Astrocyte of the cerebellum (primary cell): ENCODE measurements at regions of chr19 and their contacts with region 1.

Region 1: GRCh38 chr19:40553885-40554857 is 22.5 kb upstream of the SHKBP1 start:
- DNase-seq: no peak
- H3K4me3 ChIP-seq: no peak overlapping the region
- CTCF ChIP-seq: no peak

Region 2: GRCh38 chr19:40136818-40137217 is 417.4 kb before region 1 on chr19:
- in situ Hi-C with region 1: no loop called
- DNase-seq: no peak
- H3K4me3 ChIP-seq: no peak overlapping the region
- CTCF ChIP-seq: no peak

Region 3: GRCh38 chr19:40444192-40445028 is 109.8 kb before region 1 on chr19 and contains the start of gene SERTAD3:
- in situ Hi-C with region 1: loop called (anchors 10 kb)
- DNase-seq: peak; percentile 78
- H3K4me3 ChIP-seq: peak within 1 kb of the TSS; percentile 100
- CTCF ChIP-seq: peak; percentile 26

Region 4: DNA sequence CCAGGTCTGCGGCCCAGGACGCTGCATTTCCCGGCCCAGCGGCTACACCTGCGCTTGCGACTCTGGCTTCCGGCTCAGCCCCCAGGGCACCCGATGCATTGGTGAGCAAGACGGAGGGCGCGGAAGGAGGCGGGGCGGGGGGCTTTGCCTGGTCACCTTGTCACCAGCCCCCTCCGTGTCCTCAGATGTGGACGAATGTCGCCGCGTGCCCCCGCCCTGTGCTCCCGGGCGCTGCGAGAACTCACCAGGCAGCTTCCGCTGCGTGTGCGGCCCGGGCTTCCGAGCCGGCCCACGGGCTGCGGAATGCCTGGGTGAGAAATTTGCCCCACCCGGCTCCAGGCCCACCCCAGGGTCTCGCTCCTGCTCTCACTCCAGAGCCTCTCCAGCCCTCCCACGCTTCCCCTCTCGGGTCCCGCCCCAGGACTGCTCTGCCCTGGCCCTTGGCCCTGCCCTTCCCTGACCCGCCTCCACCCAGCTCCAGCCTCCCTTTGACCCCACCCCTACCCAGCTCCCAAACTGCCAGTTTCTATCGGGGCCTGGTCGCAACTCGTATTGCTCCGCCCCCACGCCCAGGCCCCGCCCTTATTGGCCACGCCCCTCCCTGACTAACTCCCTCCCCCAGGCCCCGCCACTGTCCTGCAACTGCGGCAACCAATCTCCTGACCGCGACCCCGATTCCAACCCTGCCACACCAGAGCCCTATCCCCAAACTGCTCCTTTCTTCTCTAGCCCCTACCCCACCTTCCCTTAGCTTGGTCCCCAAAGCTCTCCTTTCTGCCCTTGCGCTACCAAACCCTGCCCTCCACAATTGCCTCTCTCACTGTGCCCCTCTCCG is 55.6 kb after region 1 on chr19:
- in situ Hi-C with region 1: loop called (anchors 10 kb)
- DNase-seq: no peak
- H3K4me3 ChIP-seq: peak overlapping the region; percentile 22
- CTCF ChIP-seq: no peak

Region 5: DNA sequence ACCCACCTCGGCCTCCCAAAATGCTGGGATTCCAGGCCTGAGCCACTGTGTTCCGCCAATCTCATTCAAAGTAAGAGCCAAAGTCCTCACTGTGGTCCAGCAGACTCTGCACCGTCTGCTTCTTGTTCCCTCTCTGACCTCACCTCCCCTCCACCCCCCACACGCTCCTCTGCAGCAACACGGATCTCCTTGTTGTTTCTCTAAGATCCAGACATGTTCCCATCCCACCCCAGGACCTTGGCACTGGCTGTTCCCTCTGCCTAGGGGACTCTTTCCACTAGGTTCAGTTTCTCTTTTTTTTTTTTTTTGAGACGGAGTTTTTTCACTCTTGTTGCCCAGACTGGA is 85.4 kb after region 1 on chr19:
- in situ Hi-C with region 1: loop called (anchors 5 kb)
- DNase-seq: no peak
- H3K4me3 ChIP-seq: no peak overlapping the region
- CTCF ChIP-seq: no peak